AG04449 (cell line): ENCODE measurements at regions of chr2 and their contacts with region 1.

Region 1: GRCh38 chr2:237744613-237745249 is 53.8 kb upstream of the RBM44 start:
- DNase-seq: no peak
- H3K4me3 ChIP-seq: no peak overlapping the region
- CTCF ChIP-seq: peak; percentile 94

Region 2: DNA sequence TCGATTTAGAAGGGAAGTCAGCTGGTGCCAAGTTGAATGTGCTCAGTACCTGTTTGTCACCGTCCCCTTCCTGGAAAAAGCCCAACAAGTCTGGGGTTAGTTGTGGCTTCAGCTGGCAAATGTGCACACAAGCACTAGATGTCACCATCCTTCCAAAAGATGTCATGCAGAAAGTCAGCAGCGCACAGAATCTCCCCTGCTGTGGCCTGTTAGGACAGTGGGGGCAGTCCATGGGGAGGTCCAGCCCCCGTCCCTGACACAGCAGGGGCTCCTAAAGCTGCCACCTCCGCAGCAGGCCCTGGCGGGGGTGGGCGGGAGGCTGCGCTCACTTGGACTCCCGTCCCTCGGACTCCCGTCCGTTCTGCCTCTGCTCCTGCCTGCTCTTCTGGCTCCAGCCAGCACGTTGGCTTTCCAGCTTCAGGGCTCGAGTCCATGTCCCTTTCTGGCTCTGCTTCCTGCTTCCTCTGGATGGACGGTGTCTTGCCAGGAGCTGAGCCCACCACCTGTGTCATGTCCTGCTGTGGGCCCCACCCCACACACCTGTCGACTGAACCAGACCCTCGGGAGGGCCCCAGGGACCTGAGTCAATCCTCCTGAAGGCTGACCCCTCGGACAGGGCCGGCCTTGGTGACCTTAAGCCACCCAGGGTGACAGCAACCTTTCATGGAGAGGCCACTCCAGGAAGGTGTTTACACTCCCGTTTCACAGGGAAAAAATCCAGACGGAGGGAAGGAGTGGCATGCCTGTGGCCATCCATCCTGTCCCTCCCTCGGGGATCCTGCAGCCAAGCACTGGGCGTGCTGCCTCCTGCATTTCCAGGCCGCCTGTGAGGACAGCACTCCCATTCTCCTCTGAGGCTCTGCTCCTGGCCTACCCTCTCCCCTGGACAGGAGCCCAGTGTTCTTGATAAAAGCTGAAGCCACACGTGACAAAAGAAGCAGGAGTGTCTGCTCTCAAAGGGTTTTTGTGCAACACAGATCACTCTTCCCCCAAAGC is 162.7 kb before region 1 on chr2:
- CTCF ChIA-PET with region 1: interaction called, 197 read pairs
- POLR2A ChIA-PET with region 1: no interaction called
- DNase-seq: peak; percentile 7
- H3K4me3 ChIP-seq: no peak overlapping the region
- CTCF ChIP-seq: peak; percentile 51

Region 3: GRCh38 chr2:237616734-237617586 is 127.8 kb before region 1 on chr2:
- CTCF ChIA-PET with region 1: interaction called, 10 read pairs
- POLR2A ChIA-PET with region 1: no interaction called
- DNase-seq: peak; percentile 58
- H3K4me3 ChIP-seq: no peak overlapping the region; the same call in 1 of the 2 replicates
- CTCF ChIP-seq: no peak

Region 4: DNA sequence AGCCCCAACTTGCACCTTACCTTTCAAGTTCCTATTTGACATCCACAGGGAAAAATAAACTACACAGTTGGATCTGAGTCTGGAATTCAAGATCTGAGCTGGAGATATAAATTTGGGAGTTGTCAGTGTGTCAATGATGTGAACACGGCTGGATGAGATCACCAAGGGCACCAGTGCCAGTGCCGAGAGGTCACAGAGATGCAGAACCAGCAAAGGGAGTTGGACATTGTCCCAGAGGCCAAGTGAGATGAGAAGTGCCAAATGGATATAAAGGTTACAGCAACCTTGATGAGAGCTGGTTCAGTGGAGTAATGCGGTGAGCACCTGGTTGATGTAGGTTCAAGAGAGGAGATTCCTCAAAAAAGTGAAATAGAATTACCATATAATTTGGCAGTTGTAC is 92.5 kb before region 1 on chr2:
- CTCF ChIA-PET with region 1: no interaction called
- POLR2A ChIA-PET with region 1: no interaction called
- DNase-seq: no peak
- H3K4me3 ChIP-seq: no peak overlapping the region
- CTCF ChIP-seq: no peak

Region 5: DNA sequence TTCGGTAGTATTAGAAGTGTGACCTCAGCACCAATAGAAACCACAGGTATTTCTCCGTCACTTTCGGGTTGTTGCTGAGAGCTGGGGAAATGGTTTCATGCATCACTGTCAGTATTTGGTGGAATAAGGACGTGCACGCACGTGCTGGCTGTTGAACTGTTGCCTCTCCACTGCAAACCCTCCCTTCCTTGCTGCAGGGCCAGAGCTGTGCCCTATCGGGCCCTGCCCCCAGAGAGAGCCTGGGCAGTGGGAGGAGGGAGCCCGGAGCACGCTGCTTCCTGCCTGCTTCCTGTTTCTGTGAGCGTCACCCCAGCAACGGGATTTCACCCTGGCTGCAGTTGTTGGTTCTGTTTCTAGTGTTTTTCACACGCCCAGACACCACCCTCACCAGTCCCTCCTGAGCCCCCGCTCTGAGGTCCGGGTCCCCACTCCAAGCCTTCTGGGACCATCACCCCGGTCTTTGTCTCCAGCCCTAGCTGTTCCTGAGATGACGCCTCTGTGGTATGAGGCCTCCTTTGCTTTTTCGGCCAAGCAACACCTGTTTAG is 69.9 kb before region 1 on chr2:
- CTCF ChIA-PET with region 1: interaction called, 223 read pairs
- POLR2A ChIA-PET with region 1: interaction called, 3 read pairs
- DNase-seq: no peak
- H3K4me3 ChIP-seq: peak overlapping the region; percentile 29
- CTCF ChIP-seq: no peak

Region 6: DNA sequence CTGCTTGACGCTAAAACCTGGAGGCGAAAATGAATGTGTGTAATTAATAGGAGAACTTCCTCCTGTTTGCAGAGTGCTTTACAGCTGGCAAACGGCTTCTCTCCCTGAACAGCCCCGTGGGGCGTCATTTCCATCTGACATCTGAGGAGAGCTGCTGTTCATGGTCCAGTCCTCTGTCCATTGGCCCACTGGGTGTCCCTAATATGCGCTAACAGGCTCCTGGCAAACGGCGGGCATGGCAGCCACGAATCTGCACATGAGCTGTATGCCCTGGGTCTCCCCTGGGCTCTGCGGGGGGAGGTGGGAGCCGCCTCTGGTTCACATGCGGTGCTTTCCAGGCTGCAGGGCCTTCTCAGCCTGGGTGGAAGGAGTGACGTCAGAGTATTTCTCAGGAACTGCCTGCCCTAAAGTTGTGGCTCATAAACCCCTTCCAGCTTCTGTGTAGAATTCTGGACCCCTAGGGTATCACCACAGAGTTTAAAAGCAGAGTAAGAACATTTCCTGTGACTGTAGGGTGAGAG is 44.2 kb before region 1 on chr2:
- CTCF ChIA-PET with region 1: interaction called, 18 read pairs
- POLR2A ChIA-PET with region 1: no interaction called
- DNase-seq: no peak
- H3K4me3 ChIP-seq: no peak overlapping the region
- CTCF ChIP-seq: no peak

Region 7: GRCh38 chr2:237766340-237766739 is 21.6 kb after region 1 on chr2:
- CTCF ChIA-PET with region 1: interaction called, 116 read pairs
- POLR2A ChIA-PET with region 1: no interaction called
- DNase-seq: peak; percentile 24
- H3K4me3 ChIP-seq: no peak overlapping the region
- CTCF ChIP-seq: no peak

Region 8: DNA sequence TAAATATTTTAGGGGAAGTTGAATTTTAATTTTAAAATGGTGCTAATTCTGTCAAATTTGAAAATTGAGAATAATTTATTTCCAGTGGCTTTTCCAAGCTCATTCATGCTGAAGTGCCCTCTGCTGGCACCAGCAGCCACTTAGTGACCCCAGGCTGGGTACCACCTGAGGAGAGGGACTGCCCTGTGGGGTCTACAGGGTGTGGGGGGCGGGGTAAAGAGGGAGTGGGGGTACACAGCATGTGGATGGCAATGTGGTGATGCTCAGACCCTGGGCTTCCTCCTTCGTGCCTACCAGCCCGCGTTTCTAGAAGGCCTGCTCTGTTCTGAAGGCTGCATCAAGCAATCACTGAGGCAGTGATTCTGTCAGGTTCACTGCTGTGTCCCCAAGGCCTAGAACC is 271.0 kb after region 1 on chr2:
- CTCF ChIA-PET with region 1: no interaction called
- POLR2A ChIA-PET with region 1: no interaction called
- DNase-seq: no peak
- H3K4me3 ChIP-seq: no peak overlapping the region
- CTCF ChIP-seq: peak; percentile 5

Region 9: GRCh38 chr2:238271061-238271554 is 526.4 kb after region 1 on chr2:
- CTCF ChIA-PET with region 1: no interaction called
- POLR2A ChIA-PET with region 1: no interaction called
- DNase-seq: no peak
- H3K4me3 ChIP-seq: no peak overlapping the region
- CTCF ChIP-seq: no peak